Gastrocnemius medialis (tissue), 4 donors: ENCODE measurements at regions of chr7 and their contacts with region 1.

Region 1: GRCh38 chr7:150716368-150716767 is at the start of gene GIMAP1:
- DNase-seq: peak in 1 of 2 donors; percentile 26
- ATAC-seq: peak; percentile 47 to 65
- H3K4me3 ChIP-seq: peak within 1 kb of the TSS; percentile 34 to 57 (median 49)
- H3K27ac ChIP-seq: peak within 1 kb of the TSS; percentile 67 to 76 (median 72)
- H3K4me1 ChIP-seq: no peaks in the 10 kb centered on the region
- H3K27me3 ChIP-seq: no peaks in the 10 kb centered on the region
- CTCF ChIP-seq: no peak
- POLR2A ChIP-seq: peak; percentile 27 to 65
- total RNA-seq, gene GIMAP1: 4.1 to 7.8 (median 4.9) TPM

Region 2: GRCh38 chr7:150631866-150632864 is 84.2 kb before region 1 on chr7 and contains the start of gene GIMAP6:
- in situ Hi-C with region 1: no loop called
- intact Hi-C with region 1: loop called (anchors 5 kb)
- DNase-seq: no peak
- ATAC-seq: peak in 1 of 2 donors; percentile 10
- H3K4me3 ChIP-seq: peak within 1 kb of the TSS; percentile 26 to 50 (median 42)
- H3K27ac ChIP-seq: peak within 1 kb of the TSS; percentile 66 to 81 (median 72)
- H3K4me1 ChIP-seq: peaks cover 0 to 6% of the 10 kb centered on the region in 2 donors
- H3K27me3 ChIP-seq: no peaks in the 10 kb centered on the region
- CTCF ChIP-seq: no peak
- POLR2A ChIP-seq: no peak
- total RNA-seq, gene GIMAP6: 8.5 to 27.8 (median 12.4) TPM

Region 3: DNA sequence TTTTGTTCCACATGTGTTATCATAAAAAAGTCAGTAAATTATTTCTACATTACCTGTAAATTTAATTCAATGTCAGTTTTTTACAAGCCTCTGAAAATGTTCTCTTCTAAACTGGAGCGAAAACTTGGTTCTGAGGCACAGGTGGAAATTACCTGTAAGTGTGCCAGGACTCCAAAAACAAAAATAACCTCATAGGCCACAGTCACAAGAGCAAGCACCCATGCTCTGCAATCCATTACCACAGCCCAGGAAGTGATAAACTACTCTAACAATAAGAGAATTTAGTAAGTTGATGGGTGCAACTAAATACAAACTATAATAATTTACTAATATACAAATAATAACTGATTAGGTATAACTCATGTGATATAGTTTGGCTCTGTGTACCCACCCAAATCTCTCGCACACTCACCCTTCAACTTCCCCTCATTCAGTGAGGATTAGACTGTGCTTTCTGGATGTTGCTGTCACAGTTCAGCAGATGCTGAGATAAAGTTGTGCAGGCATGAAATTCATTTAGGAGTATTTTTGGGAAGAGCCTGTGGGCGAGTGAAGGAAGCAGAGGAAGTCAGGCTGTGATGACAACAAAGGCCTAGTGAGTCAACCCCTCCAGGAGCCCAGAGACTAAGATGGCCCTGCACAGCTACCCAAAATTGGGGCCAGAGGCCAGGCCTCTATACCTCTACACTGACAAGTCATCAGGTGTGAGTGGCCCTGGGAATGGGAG is 67.9 kb before region 1 on chr7:
- in situ Hi-C with region 1: no loop called
- intact Hi-C with region 1: no loop called
- DNase-seq: no peak
- ATAC-seq: no peak
- H3K4me3 ChIP-seq: no peak overlapping the region
- H3K27ac ChIP-seq: no peak overlapping the region
- H3K4me1 ChIP-seq: no peaks in the 10 kb centered on the region
- H3K27me3 ChIP-seq: no peaks in the 10 kb centered on the region
- CTCF ChIP-seq: no peak
- POLR2A ChIP-seq: no peak

Region 4: GRCh38 chr7:150879345-150879744 is 163.0 kb after region 1 on chr7:
- in situ Hi-C with region 1: no loop called
- intact Hi-C with region 1: no loop called
- DNase-seq: no peak
- ATAC-seq: no peak
- H3K4me3 ChIP-seq: no peak overlapping the region
- H3K27ac ChIP-seq: no peak overlapping the region
- H3K4me1 ChIP-seq: no peaks in the 10 kb centered on the region
- H3K27me3 ChIP-seq: no peaks in the 10 kb centered on the region
- CTCF ChIP-seq: no peak
- POLR2A ChIP-seq: no peak

Region 5: DNA sequence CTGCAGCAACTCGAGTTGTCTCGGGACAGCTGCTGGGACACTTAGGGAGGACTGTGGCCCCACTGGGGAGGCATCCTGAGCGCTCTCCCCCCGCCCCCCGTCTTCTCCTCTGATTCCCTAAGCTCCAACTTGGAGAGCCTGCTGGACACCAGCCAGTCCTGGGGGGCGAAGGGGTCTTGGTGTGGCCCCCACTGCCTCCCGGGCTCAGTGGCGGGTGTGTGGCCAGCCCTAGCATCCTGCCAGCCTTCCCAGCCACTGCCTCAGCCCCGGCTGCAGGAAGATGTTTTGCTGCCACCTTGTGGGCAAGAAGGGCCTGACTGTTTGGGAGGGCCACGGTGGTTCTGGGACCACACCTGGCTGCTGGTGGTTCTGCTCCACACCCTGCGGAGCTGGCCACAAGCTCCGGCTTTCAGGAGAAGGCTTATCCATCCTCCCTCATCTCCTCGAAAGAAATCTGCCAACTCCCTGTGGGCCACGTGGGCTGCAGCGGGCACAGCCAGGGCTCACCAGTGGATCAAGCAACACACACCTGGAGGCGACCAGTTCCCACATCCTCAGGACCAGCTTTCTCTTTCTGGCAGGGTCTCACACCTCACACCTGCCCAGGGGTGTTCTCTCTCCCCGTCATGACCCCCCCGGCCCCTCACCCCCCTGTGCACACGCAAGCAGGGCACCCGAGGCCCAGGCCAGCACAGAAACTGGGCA is 394.7 kb after region 1 on chr7:
- in situ Hi-C with region 1: no loop called
- intact Hi-C with region 1: no loop called
- DNase-seq: peak; percentile 54 to 66
- ATAC-seq: peak; percentile 87 to 89
- H3K4me3 ChIP-seq: no peak overlapping the region
- H3K27ac ChIP-seq: no peak overlapping the region
- H3K4me1 ChIP-seq: peaks cover 4 to 5% of the 10 kb centered on the region in 2 donors
- H3K27me3 ChIP-seq: no peaks in the 10 kb centered on the region
- CTCF ChIP-seq: peak; percentile 82 to 96 (median 89)
- POLR2A ChIP-seq: no peak